ENCODE measurements at regions of chr12 and their contacts with region 1.

Region 1: GRCh38 chr12:59937148-59937547 is 341.3 kb downstream of the SLC16A7 start:
- DNase-seq: no peak
- ATAC-seq: no peak
- H3K4me3 ChIP-seq: no peak overlapping the region
- H3K4me3 Mint-ChIP-seq: no peak overlapping the region
- H3K27ac ChIP-seq: no peak overlapping the region
- H3K27ac Mint-ChIP-seq: no peak overlapping the region
- H3K4me1 ChIP-seq: no peaks in the 10 kb centered on the region
- H3K4me1 Mint-ChIP-seq: no peaks in the 10 kb centered on the region
- H3K27me3 ChIP-seq: no peaks in the 10 kb centered on the region
- H3K27me3 Mint-ChIP-seq: no peaks in the 10 kb centered on the region
- CTCF ChIP-seq: no peak

Region 2: DNA sequence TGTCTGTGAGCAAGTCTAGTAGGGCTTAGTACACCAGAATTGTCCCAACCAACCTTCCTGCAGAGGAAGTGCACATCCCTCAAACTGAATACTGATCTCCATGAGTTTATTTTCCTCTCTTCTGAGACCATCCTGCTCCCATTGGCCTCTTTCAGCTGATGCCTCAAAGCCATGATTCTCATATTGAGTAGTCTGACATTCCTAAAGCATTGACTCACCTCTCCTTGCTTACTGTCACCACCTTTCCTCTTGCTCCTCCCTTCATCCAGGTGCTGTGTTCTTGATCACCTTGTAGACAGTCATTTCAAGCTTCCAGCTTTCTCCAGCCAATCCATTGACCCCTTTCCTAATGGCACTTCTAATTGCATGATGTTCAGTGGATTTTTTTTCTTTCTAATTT is 1739.4 kb after region 1 on chr12:
- CTCF ChIA-PET with region 1: no interaction called
- POLR2A ChIA-PET with region 1: no interaction called
- intact Hi-C with region 1: loop called in 1 of 2 experiments (anchors 5 kb)
- DNase-seq: no peak
- ATAC-seq: no peak
- H3K4me3 ChIP-seq: no peak overlapping the region
- H3K4me3 Mint-ChIP-seq: no peak overlapping the region
- H3K27ac ChIP-seq: no peak overlapping the region
- H3K27ac Mint-ChIP-seq: no peak overlapping the region
- H3K4me1 ChIP-seq: no peaks in the 10 kb centered on the region
- H3K4me1 Mint-ChIP-seq: no peaks in the 10 kb centered on the region
- H3K27me3 ChIP-seq: no peaks in the 10 kb centered on the region
- H3K27me3 Mint-ChIP-seq: no peaks in the 10 kb centered on the region
- CTCF ChIP-seq: no peak

Measured in CD4-positive, alpha-beta T cell (primary cell).